ENCODE measurements at regions of chr17 and their contacts with region 1.

Region 1: DNA sequence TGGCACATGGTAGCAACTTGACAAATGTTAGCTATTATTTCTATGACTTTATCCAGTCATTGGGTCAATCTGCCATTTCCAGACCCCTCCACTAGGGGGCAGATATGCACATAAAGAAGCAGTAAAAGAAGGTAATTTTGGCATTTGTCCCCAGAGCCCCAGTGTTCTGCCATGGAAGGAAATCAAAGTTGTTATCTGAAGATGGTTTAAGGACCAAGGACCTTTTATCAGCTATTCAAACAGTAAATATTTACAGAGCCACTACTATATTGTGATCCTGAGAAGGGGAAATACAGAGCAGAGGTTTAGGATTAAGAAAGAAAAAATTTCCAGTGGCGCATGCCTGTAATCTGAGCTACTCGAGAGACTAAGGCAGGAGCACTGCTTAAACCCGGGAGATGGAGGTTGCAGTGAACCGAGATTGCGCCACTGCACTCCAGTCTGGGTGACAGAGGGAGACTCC is 20.0 kb downstream of the TRAF4 start:
- DNase-seq: peak in 8 of 9 donors; percentile 63 to 82 (median 76)
- ATAC-seq: peak; percentile 95
- H3K4me3 ChIP-seq: no peak overlapping the region
- H3K4me3 Mint-ChIP-seq: no peak overlapping the region
- H3K27ac ChIP-seq: no peak overlapping the region
- H3K27ac Mint-ChIP-seq: peak overlapping the region in 5 of 9 donors; percentile 6 to 93 (median 75)
- H3K4me1 ChIP-seq: no peaks in the 10 kb centered on the region
- H3K4me1 Mint-ChIP-seq: peaks cover 4 to 16% (median 6%) of the 10 kb centered on the region in 7 donors
- H3K27me3 ChIP-seq: no peaks in the 10 kb centered on the region
- H3K27me3 Mint-ChIP-seq: no peaks in the 10 kb centered on the region

Region 2: GRCh38 chr17:28563475-28563874 is 200.4 kb before region 1 on chr17:
- CTCF ChIA-PET with region 1: no interaction called
- POLR2A ChIA-PET with region 1: no interaction called
- intact Hi-C with region 1: no loop called
- DNase-seq: no peak
- ATAC-seq: no peak
- H3K4me3 ChIP-seq: no peak overlapping the region
- H3K4me3 Mint-ChIP-seq: no peak overlapping the region
- H3K27ac ChIP-seq: no peak overlapping the region
- H3K27ac Mint-ChIP-seq: no peak overlapping the region
- H3K4me1 ChIP-seq: no peaks in the 10 kb centered on the region
- H3K4me1 Mint-ChIP-seq: peaks cover 13 to 29% (median 24%) of the 10 kb centered on the region in 7 donors
- H3K27me3 ChIP-seq: no peaks in the 10 kb centered on the region
- H3K27me3 Mint-ChIP-seq: no peaks in the 10 kb centered on the region

Region 3: GRCh38 chr17:28743225-28744103 is 20.4 kb before region 1 on chr17 and contains the start of gene TRAF4:
- CTCF ChIA-PET with region 1: interaction called, 13 read pairs
- POLR2A ChIA-PET with region 1: interaction called, 3 read pairs
- intact Hi-C with region 1: no loop called
- DNase-seq: peak; percentile 60 to 86 (median 73)
- ATAC-seq: peak; percentile 93
- H3K4me3 ChIP-seq: peak within 1 kb of the TSS; percentile 82
- H3K4me3 Mint-ChIP-seq: peak within 1 kb of the TSS; percentile 87 to 94 (median 91)
- H3K27ac ChIP-seq: peak within 1 kb of the TSS; percentile 83
- H3K27ac Mint-ChIP-seq: peak within 1 kb of the TSS; percentile 78 to 95 (median 92)
- H3K4me1 ChIP-seq: peaks cover 11 to 28% of the 10 kb centered on the region in 2 donors
- H3K4me1 Mint-ChIP-seq: peaks cover 2 to 42% (median 27%) of the 10 kb centered on the region in 7 donors
- H3K27me3 ChIP-seq: no peaks in the 10 kb centered on the region
- H3K27me3 Mint-ChIP-seq: no peaks in the 10 kb centered on the region
- total RNA-seq, gene TRAF4: 22.3 to 228 (median 81.6) TPM

Region 4: GRCh38 chr17:28812091-28812747 is 48.4 kb after region 1 on chr17:
- CTCF ChIA-PET with region 1: interaction called, 7 read pairs
- POLR2A ChIA-PET with region 1: interaction called, 3 read pairs
- intact Hi-C with region 1: loop called (anchors 1 to 10 kb)
- DNase-seq: peak; percentile 91 to 97 (median 95)
- ATAC-seq: peak; percentile 100
- H3K4me3 ChIP-seq: peak overlapping the region; percentile 85
- H3K4me3 Mint-ChIP-seq: peak overlapping the region; percentile 87 to 99 (median 92)
- H3K27ac ChIP-seq: peak overlapping the region; percentile 96
- H3K27ac Mint-ChIP-seq: peak overlapping the region; percentile 82 to 100 (median 97)
- H3K4me1 ChIP-seq: peaks cover 0 to 16% of the 10 kb centered on the region in 2 donors
- H3K4me1 Mint-ChIP-seq: peaks cover 21 to 49% (median 40%) of the 10 kb centered on the region in 7 donors
- H3K27me3 ChIP-seq: no peaks in the 10 kb centered on the region
- H3K27me3 Mint-ChIP-seq: no peaks in the 10 kb centered on the region

Region 5: GRCh38 chr17:28878981-28879380 is 115.1 kb after region 1 on chr17:
- CTCF ChIA-PET with region 1: interaction called, 11 read pairs
- POLR2A ChIA-PET with region 1: no interaction called
- intact Hi-C with region 1: no loop called
- DNase-seq: peak in 1 of 9 donors; percentile 6
- ATAC-seq: no peak
- H3K4me3 ChIP-seq: no peak overlapping the region
- H3K4me3 Mint-ChIP-seq: no peak overlapping the region
- H3K27ac ChIP-seq: no peak overlapping the region
- H3K27ac Mint-ChIP-seq: peak overlapping the region in 1 of 9 donors; percentile 21
- H3K4me1 ChIP-seq: no peaks in the 10 kb centered on the region
- H3K4me1 Mint-ChIP-seq: peaks cover 0 to 9% (median 0%) of the 10 kb centered on the region in 7 donors
- H3K27me3 ChIP-seq: no peaks in the 10 kb centered on the region
- H3K27me3 Mint-ChIP-seq: no peaks in the 10 kb centered on the region

Region 6: DNA sequence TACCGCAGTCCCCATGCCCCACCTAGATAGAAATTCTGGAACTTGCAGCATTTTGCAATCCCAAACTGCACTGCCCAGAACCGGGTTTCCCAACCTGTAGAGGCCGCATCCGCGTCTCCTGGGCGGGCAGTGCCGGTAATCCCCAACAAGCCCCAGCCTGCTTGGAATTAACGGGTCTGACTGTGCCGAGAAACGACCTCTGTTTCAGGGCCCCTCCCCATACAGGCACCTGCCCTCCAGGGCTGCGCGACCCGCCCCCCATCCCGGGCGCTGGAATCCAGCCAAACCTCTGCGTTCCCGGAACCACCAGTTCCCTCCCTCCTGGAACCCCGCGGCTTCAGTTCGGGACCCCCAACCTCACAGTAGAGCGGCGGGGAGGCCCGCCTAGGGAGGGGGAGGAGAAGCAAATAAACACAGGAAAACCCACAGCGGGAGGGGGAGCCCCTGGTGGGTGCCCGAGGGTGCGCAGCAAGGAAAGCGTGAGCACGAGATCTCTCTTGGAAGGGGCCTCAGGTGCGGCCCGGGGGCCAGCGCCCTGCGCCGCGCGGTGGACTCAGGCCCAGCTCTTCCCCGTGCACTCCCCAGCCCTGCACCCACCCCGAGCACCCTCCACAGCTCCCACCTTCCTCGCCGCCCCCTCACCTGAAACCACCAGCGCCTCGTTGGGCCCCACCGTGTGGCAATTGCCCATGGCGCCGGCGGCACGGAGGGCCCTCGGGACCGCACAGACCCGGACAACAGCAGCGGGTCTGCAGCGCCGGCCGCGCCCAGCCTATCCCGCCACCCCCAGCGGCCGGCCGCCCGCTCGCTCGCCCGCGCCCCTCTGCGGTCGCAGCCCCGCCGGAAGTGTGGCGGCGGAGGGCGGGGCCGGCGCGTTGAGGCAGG is 133.3 kb after region 1 on chr17 and contains the start of gene FLOT2:
- CTCF ChIA-PET with region 1: interaction called, 30 read pairs
- POLR2A ChIA-PET with region 1: interaction called, 13 read pairs
- intact Hi-C with region 1: loop called in 1 of 2 experiments (anchors 1 kb)
- DNase-seq: peak; percentile 41 to 77 (median 76)
- ATAC-seq: peak; percentile 84
- H3K4me3 ChIP-seq: peak within 1 kb of the TSS; percentile 82
- H3K4me3 Mint-ChIP-seq: peak within 1 kb of the TSS; percentile 86 to 98 (median 96)
- H3K27ac ChIP-seq: peak within 1 kb of the TSS; percentile 96
- H3K27ac Mint-ChIP-seq: peak within 1 kb of the TSS; percentile 95 to 99 (median 97)
- H3K4me1 ChIP-seq: peaks cover 43 to 45% of the 10 kb centered on the region in 2 donors
- H3K4me1 Mint-ChIP-seq: peaks cover 32 to 80% (median 64%) of the 10 kb centered on the region in 7 donors
- H3K27me3 ChIP-seq: no peaks in the 10 kb centered on the region
- H3K27me3 Mint-ChIP-seq: no peaks in the 10 kb centered on the region
- total RNA-seq, gene FLOT2: 134 to 252 (median 191) TPM

Region 7: DNA sequence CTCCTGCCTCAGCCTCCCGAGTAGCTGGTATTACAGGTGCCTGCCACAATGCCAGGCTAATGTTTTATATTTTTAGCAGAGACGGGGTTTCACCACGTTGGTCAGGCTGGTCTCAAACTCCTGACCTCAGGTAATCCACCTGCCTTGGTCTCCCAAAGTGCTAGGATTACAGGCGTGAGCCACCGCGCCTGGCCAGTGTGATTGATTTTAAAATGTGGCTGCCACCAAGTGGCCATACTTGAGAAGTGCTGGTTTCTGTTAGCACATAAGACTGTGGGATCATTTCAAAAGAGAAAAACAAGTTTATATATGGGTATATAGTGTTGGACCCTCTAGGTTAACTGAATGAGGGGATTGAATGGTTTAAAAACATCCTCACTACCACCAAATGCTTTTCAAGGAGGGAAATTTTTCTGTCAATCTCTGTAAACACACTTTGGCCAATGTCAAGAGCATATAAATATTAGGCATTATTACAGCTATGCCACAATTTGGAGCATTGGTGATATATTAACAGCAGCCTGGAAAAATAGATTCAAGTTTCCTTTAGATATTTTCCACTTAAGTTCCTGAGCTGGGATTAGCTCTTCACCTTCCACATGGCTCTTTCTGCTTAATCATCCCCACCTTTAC is 152.6 kb after region 1 on chr17:
- CTCF ChIA-PET with region 1: interaction called, 54 read pairs
- POLR2A ChIA-PET with region 1: interaction called, 3 read pairs
- intact Hi-C with region 1: loop called (anchors 1 kb)
- DNase-seq: peak in 6 of 9 donors; percentile 38 to 50 (median 42)
- ATAC-seq: peak; percentile 90
- H3K4me3 ChIP-seq: no peak overlapping the region
- H3K4me3 Mint-ChIP-seq: no peak overlapping the region
- H3K27ac ChIP-seq: peak overlapping the region; percentile 46
- H3K27ac Mint-ChIP-seq: peak overlapping the region in 7 of 9 donors; percentile 46 to 93 (median 65)
- H3K4me1 ChIP-seq: no peaks in the 10 kb centered on the region
- H3K4me1 Mint-ChIP-seq: peaks cover 0 to 9% (median 6%) of the 10 kb centered on the region in 7 donors
- H3K27me3 ChIP-seq: no peaks in the 10 kb centered on the region
- H3K27me3 Mint-ChIP-seq: no peaks in the 10 kb centered on the region